ENCODE measurements at regions of chr2 and their contacts with region 1.

Region 1: DNA sequence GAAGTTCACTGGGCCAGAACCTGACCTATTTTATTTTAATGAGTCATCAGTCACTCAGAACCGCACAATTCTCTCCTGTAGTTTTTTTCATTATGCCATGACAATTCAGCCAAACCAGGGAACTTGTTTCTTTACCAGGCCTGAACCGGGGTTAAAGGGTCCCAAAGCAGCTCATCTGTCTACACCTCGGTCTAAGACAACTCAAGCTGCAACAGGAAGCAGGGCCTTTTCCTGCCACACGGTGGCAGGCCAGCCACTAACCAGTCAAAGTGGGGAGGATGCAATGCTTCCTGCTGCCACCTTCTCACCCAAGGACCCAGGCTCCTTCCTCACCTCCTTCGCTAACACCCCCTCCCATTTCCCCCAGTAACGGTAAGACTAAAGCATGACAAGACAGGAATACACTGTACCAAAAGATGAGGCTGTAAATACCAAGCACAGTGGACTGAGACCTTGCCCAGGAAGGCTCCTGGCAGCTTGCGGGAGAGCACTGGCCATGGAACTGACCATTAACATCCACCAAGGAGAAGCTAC is 56.7 kb upstream of the ACKR3 start:
- DNase-seq: peak; percentile 42
- H3K4me3 ChIP-seq: no peak overlapping the region
- H3K27ac ChIP-seq: no peak overlapping the region
- H3K4me1 ChIP-seq: peaks cover 18% of the 10 kb centered on the region
- H3K27me3 ChIP-seq: no peaks in the 10 kb centered on the region
- CTCF ChIP-seq: peak; percentile 77 to 78
- POLR2A ChIP-seq: no peak

Region 2: GRCh38 chr2:236352761-236353593 is 160.0 kb before region 1 on chr2:
- CTCF ChIA-PET with region 1: interaction called, 3 read pairs
- POLR2A ChIA-PET with region 1: no interaction called
- dilution Hi-C with region 1: no loop called
- intact Hi-C with region 1: loop called (anchors 5 kb)
- DNase-seq: peak; percentile 44
- H3K4me3 ChIP-seq: no peak overlapping the region
- H3K27ac ChIP-seq: no peak overlapping the region
- H3K4me1 ChIP-seq: no peaks in the 10 kb centered on the region
- H3K27me3 ChIP-seq: no peaks in the 10 kb centered on the region
- CTCF ChIP-seq: peak; percentile 60 to 61
- POLR2A ChIP-seq: no peak

Region 3: DNA sequence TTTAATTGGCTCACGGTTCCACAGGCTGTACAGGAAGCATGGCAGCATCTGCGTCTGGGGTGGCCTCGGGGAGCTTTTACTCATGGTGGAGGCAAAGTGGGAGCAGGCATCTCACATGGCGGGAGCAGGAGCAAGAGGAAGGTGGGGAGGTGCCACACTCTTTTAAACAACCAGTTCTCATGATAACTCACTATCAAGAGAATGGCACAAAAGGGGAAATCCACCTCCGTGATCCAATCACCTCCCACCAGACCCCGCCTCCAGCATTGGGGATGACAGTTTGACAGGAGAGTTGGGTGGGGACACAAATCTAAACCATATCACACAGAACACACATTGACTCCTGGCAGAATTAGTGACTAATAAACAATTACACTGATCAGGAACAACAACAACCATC is 11.9 kb before region 1 on chr2:
- CTCF ChIA-PET with region 1: interaction called, 12 read pairs
- POLR2A ChIA-PET with region 1: interaction called, 4 read pairs
- dilution Hi-C with region 1: no loop called
- intact Hi-C with region 1: no loop called
- DNase-seq: no peak
- H3K4me3 ChIP-seq: no peak overlapping the region
- H3K27ac ChIP-seq: no peak overlapping the region
- H3K4me1 ChIP-seq: no peaks in the 10 kb centered on the region
- H3K27me3 ChIP-seq: peaks cover 4 to 5% of the 10 kb centered on the region in 2 experiments
- CTCF ChIP-seq: no peak
- POLR2A ChIP-seq: no peak

Region 4: DNA sequence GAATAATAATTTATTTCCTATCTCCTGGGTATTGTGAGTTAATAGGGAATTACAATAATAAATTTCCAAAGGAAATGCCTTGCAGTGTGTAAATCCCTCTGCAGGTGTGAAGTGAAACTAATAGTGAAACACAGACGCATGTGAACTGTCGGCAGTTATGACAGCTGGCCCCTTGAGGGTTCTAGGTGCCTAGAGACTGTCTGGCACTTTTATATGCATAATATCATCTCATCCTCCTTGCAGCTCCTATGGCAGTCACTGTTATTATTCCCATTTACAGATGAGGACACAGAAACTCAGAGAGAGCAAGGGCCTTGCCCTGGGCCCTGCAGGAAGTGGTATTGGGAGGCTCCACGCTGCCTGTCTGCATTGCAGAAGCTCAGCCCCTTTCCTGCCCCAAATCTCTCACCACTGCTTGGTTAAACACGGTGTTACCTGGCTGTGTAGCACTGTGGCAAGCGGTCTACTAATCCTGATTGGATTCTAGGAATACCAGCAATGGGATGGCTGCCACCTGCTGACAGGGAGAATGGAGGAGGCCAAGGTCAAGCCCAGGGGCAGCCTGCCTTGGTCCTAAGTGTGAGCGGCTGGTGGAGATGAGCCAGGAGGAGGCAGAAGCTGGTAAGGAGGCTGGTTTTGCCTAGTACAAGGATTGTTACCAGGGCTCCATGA is 23.9 kb after region 1 on chr2:
- CTCF ChIA-PET with region 1: interaction called, 12 read pairs
- POLR2A ChIA-PET with region 1: no interaction called
- dilution Hi-C with region 1: no loop called
- intact Hi-C with region 1: loop called (anchors 1 kb)
- DNase-seq: no peak
- H3K4me3 ChIP-seq: no peak overlapping the region
- H3K27ac ChIP-seq: no peak overlapping the region
- H3K4me1 ChIP-seq: peaks cover 12% of the 10 kb centered on the region
- H3K27me3 ChIP-seq: no peaks in the 10 kb centered on the region
- CTCF ChIP-seq: no peak
- POLR2A ChIP-seq: no peak

Region 5: GRCh38 chr2:236653863-236654262 is 140.9 kb after region 1 on chr2:
- CTCF ChIA-PET with region 1: no interaction called
- POLR2A ChIA-PET with region 1: no interaction called
- dilution Hi-C with region 1: no loop called
- intact Hi-C with region 1: no loop called
- DNase-seq: no peak
- H3K4me3 ChIP-seq: no peak overlapping the region
- H3K27ac ChIP-seq: no peak overlapping the region
- H3K4me1 ChIP-seq: no peaks in the 10 kb centered on the region
- H3K27me3 ChIP-seq: no peaks in the 10 kb centered on the region
- CTCF ChIP-seq: no peak
- POLR2A ChIP-seq: no peak

Region 6: GRCh38 chr2:236824877-236825692 is 312.1 kb after region 1 on chr2:
- CTCF ChIA-PET with region 1: no interaction called
- POLR2A ChIA-PET with region 1: no interaction called
- dilution Hi-C with region 1: no loop called
- intact Hi-C with region 1: loop called (anchors 5 kb)
- DNase-seq: peak; percentile 18
- H3K4me3 ChIP-seq: no peak overlapping the region
- H3K27ac ChIP-seq: no peak overlapping the region
- H3K4me1 ChIP-seq: peaks cover 37% of the 10 kb centered on the region
- H3K27me3 ChIP-seq: no peaks in the 10 kb centered on the region
- CTCF ChIP-seq: no peak
- POLR2A ChIP-seq: no peak

Region 7: GRCh38 chr2:237060534-237061312 is 547.8 kb after region 1 on chr2:
- CTCF ChIA-PET with region 1: interaction called, 53 read pairs
- POLR2A ChIA-PET with region 1: no interaction called
- dilution Hi-C with region 1: no loop called
- intact Hi-C with region 1: loop called (anchors 1 kb)
- DNase-seq: peak; percentile 77
- H3K4me3 ChIP-seq: peak overlapping the region in 1 of 3 experiments; percentile 11
- H3K27ac ChIP-seq: peak overlapping the region; percentile 9
- H3K4me1 ChIP-seq: peaks cover 7% of the 10 kb centered on the region
- H3K27me3 ChIP-seq: no peaks in the 10 kb centered on the region
- CTCF ChIP-seq: peak; percentile 65 to 67
- POLR2A ChIP-seq: no peak

Measured in endothelial cell of umbilical vein (primary cell).